OCI-LY7 (cell line): ENCODE measurements at regions of chr10 and their contacts with region 1.

Region 1: GRCh38 chr10:16835228-16835627 is 18.0 kb upstream of the RSU1 start:
- DNase-seq: peak; percentile 39
- H3K4me3 ChIP-seq: no peak overlapping the region
- H3K27ac ChIP-seq: no peak overlapping the region
- H3K4me1 ChIP-seq: peaks cover 5% of the 10 kb centered on the region
- CTCF ChIP-seq: no peak

Region 2: GRCh38 chr10:16817125-16818019 is 17.9 kb before region 1 on chr10 and contains the start of gene RSU1:
- CTCF ChIA-PET with region 1: no interaction called
- POLR2A ChIA-PET with region 1: interaction called, 11 read pairs
- intact Hi-C with region 1: no loop called
- DNase-seq: peak; percentile 99
- H3K4me3 ChIP-seq: peak within 1 kb of the TSS; percentile 81
- H3K27ac ChIP-seq: peak within 1 kb of the TSS; percentile 20
- H3K4me1 ChIP-seq: peaks cover 12% of the 10 kb centered on the region
- CTCF ChIP-seq: no peak
- total RNA-seq, gene RSU1: 25.3 and 26.0 TPM in 2 replicates

Region 3: GRCh38 chr10:16886031-16886430 is 50.8 kb after region 1 on chr10:
- CTCF ChIA-PET with region 1: no interaction called
- POLR2A ChIA-PET with region 1: no interaction called
- intact Hi-C with region 1: no loop called
- DNase-seq: no peak
- H3K4me3 ChIP-seq: no peak overlapping the region
- H3K27ac ChIP-seq: no peak overlapping the region
- H3K4me1 ChIP-seq: no peaks in the 10 kb centered on the region
- CTCF ChIP-seq: no peak